ENCODE measurements at regions of chr9 and their contacts with region 1.

Region 1: GRCh38 chr9:126704873-126705766 is 91.4 kb downstream of the LMX1B start:
- DNase-seq: no peak
- H3K4me3 ChIP-seq: peak overlapping the region; percentile 7; the same call in 1 of the 2 replicates
- H3K27ac ChIP-seq: no peak overlapping the region
- H3K27me3 ChIP-seq: peaks cover 29% of the 10 kb centered on the region
- CTCF ChIP-seq: peak; percentile 86

Region 2: DNA sequence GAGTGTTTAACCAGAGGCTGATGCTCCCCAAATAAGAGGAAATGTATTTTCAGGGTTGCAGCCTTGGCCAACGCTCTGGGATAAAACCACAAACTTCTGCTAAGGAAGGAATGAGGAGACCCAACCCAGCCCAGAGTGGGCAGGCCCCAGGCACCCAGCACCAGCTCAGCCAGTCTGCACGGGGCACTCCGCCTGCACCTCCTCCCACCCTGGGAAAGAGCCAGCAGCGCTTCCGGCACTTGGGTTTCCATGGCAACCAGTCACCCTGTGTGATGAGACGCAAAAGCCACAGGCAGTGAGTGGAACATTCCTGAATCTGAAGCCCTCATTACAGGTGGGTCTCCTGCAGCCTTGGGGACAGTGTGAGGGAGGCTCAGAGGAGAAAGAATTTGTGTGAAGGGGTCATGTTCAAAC is 14.5 kb after region 1 on chr9:
- CTCF ChIA-PET with region 1: interaction called, 13 read pairs
- POLR2A ChIA-PET with region 1: no interaction called
- DNase-seq: no peak
- H3K4me3 ChIP-seq: no peak overlapping the region
- H3K27ac ChIP-seq: no peak overlapping the region
- H3K27me3 ChIP-seq: peaks cover 35% of the 10 kb centered on the region
- CTCF ChIP-seq: no peak

Region 3: GRCh38 chr9:126733005-126733404 is 27.9 kb after region 1 on chr9:
- CTCF ChIA-PET with region 1: interaction called, 10 read pairs
- POLR2A ChIA-PET with region 1: no interaction called
- DNase-seq: no peak
- H3K4me3 ChIP-seq: no peak overlapping the region
- H3K27ac ChIP-seq: no peak overlapping the region
- H3K27me3 ChIP-seq: no peaks in the 10 kb centered on the region
- CTCF ChIP-seq: no peak

Region 4: GRCh38 chr9:127396808-127397497 is 691.8 kb after region 1 on chr9 and contains the start of gene SLC2A8:
- CTCF ChIA-PET with region 1: no interaction called
- POLR2A ChIA-PET with region 1: no interaction called
- DNase-seq: peak; percentile 99
- H3K4me3 ChIP-seq: peak within 1 kb of the TSS; percentile 66
- H3K27ac ChIP-seq: no peak within 1 kb of the TSS
- H3K27me3 ChIP-seq: peaks cover 15% of the 10 kb centered on the region
- CTCF ChIP-seq: no peak
- polyA plus RNA-seq, gene SLC2A8: 5.4 and 6.3 TPM in 2 replicates